Naive thymus-derived CD8-positive, alpha-beta T cell (primary cell): ENCODE measurements at regions of chr1 and their contacts with region 1.

Region 1: GRCh38 chr1:224329842-224330753 is at the start of gene NVL:
- DNase-seq: peak; percentile 67 to 91 (median 77)
- ATAC-seq: peak; percentile 93 to 94
- H3K4me3 Mint-ChIP-seq: peak within 1 kb of the TSS; percentile 91 to 99 (median 97)
- H3K27ac Mint-ChIP-seq: peak within 1 kb of the TSS; percentile 97 to 100 (median 100)
- H3K4me1 Mint-ChIP-seq: peaks cover 17 to 63% (median 46%) of the 10 kb centered on the region in 4 donors
- H3K27me3 Mint-ChIP-seq: no peaks in the 10 kb centered on the region
- polyA plus RNA-seq, gene NVL: 13.6 to 16.9 (median 16.2) TPM

Region 2: GRCh38 chr1:224113918-224114786 is 215.9 kb before region 1 on chr1 and contains the start of gene FBXO28:
- POLR2A ChIA-PET with region 1: interaction called, 12 read pairs
- DNase-seq: peak; percentile 77 to 97 (median 89)
- ATAC-seq: peak; percentile 91 to 92
- H3K4me3 Mint-ChIP-seq: peak within 1 kb of the TSS; percentile 85 to 96 (median 89)
- H3K27ac Mint-ChIP-seq: peak within 1 kb of the TSS; percentile 87 to 96 (median 92)
- H3K4me1 Mint-ChIP-seq: peaks cover 8 to 37% (median 27%) of the 10 kb centered on the region in 4 donors
- H3K27me3 Mint-ChIP-seq: peaks cover 0 to 5% (median 0%) of the 10 kb centered on the region in 5 donors
- polyA plus RNA-seq, gene FBXO28: 15.5 to 16.1 (median 15.9) TPM

Region 3: GRCh38 chr1:224392411-224393249 is 62.5 kb after region 1 on chr1:
- POLR2A ChIA-PET with region 1: no interaction called
- DNase-seq: no peak
- ATAC-seq: peak; percentile 71 to 77
- H3K4me3 Mint-ChIP-seq: peak overlapping the region in 3 of 10 donors; percentile 5 to 34 (median 33)
- H3K27ac Mint-ChIP-seq: peak overlapping the region; percentile 54 to 80 (median 74)
- H3K4me1 Mint-ChIP-seq: peaks cover 12 to 33% (median 25%) of the 10 kb centered on the region in 4 donors
- H3K27me3 Mint-ChIP-seq: no peaks in the 10 kb centered on the region

Region 4: DNA sequence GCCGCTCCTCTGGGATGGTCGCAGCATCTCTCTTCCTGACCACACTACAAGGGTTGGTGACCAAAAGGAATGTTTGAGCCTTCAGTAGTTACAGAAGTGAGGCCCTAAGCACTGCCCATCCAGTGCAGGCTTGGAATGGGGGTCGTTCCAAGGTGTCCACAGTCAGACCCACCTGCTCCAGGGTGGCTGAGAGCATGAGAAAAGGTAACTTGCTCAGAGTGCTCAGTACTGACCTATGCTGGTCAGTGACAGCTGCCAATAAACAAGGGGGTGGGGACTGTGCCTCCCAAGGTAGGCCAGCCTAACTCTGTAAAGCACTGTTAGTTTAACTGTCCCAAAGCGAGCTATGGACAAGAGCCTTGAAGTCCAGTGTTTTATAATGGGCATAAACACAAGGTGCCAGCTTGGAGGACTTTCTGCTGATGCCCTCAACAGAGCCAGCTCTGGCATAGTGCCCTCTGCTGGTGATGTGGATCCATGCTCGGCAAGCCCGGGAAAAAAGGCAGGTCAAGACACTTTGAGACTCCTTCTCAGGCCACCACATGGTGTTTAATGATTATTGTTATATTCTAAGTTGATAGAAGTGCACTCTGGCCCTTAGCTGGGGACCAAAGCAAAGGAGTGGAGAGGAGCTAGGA is 521.2 kb after region 1 on chr1:
- POLR2A ChIA-PET with region 1: no interaction called
- DNase-seq: peak in 9 of 10 donors; percentile 10 to 66 (median 27)
- ATAC-seq: no peak
- H3K4me3 Mint-ChIP-seq: no peak overlapping the region
- H3K27ac Mint-ChIP-seq: no peak overlapping the region
- H3K4me1 Mint-ChIP-seq: no peaks in the 10 kb centered on the region
- H3K27me3 Mint-ChIP-seq: peaks cover 0 to 12% (median 4%) of the 10 kb centered on the region in 5 donors